ENCODE measurements at regions of chr11 and their contacts with region 1.

Region 1: DNA sequence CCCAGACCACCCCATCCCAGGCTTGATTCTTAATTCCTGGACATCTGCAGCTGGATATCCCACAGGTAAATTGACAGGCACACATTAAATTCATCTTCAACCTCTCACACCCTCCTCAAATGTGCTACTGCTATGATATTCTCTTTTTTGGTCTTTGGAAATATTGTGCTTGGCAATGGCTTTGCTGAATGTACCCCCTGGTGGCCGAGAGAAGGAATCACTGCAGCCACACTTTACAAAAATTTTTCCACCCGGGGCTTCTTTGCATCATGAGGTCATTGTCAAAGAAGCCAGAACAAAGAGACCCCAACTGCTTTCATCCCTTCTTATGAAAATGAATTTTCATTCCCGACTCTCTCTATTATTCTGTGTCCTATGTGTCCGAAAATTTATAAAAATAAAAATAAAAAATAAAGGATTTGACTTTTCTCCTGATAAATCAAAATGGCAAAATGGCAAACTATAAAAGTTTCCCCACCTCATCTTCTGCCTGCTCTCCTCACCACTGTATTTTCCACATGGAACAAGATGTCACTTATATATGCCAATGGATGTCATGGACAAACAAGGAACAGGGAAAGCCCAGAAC is 15.0 kb upstream of the CYB5R2 start:
- DNase-seq: peak; percentile 35
- H3K4me3 Mint-ChIP-seq: no peak overlapping the region
- H3K27ac Mint-ChIP-seq: no peak overlapping the region
- H3K4me1 Mint-ChIP-seq: peaks cover 6% of the 10 kb centered on the region
- H3K27me3 Mint-ChIP-seq: peaks cover 26% of the 10 kb centered on the region

Region 2: DNA sequence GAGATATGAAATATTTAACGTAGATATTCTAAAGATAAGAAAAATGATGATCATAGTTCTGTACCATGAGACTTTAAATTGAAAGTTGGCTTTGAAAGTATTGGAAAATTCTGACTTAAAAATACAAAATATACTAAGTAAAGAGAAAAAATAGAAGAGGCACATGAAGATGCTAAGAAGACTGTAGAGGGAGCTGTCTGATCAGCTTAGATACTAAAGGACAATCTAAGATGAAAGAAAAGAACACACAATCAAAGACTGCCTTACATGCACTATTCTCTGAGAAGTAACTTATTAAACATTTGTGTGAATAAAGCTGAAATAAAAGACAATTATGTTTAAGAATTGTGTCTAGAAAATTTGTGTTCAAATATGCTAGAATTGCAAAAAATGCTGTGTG is 544.4 kb before region 1 on chr11:
- CTCF ChIA-PET with region 1: no interaction called
- intact Hi-C with region 1: loop called (anchors 2 kb)
- DNase-seq: no peak
- H3K4me3 Mint-ChIP-seq: no peak overlapping the region
- H3K27ac Mint-ChIP-seq: no peak overlapping the region
- H3K4me1 Mint-ChIP-seq: no peaks in the 10 kb centered on the region
- H3K27me3 Mint-ChIP-seq: peaks cover 5% of the 10 kb centered on the region

Region 3: GRCh38 chr11:7571640-7572000 is 116.7 kb before region 1 on chr11:
- CTCF ChIA-PET with region 1: interaction called, 12 read pairs
- intact Hi-C with region 1: loop called (anchors 1 kb)
- DNase-seq: peak; percentile 62
- H3K4me3 Mint-ChIP-seq: no peak overlapping the region
- H3K27ac Mint-ChIP-seq: no peak overlapping the region
- H3K4me1 Mint-ChIP-seq: peaks cover 19% of the 10 kb centered on the region
- H3K27me3 Mint-ChIP-seq: no peaks in the 10 kb centered on the region

Region 4: GRCh38 chr11:7592711-7593110 is 95.6 kb before region 1 on chr11:
- CTCF ChIA-PET with region 1: no interaction called
- intact Hi-C with region 1: no loop called
- DNase-seq: no peak
- H3K4me3 Mint-ChIP-seq: no peak overlapping the region
- H3K27ac Mint-ChIP-seq: no peak overlapping the region
- H3K4me1 Mint-ChIP-seq: peaks cover 18% of the 10 kb centered on the region
- H3K27me3 Mint-ChIP-seq: no peaks in the 10 kb centered on the region

Region 5: GRCh38 chr11:7672960-7673723 is 15.2 kb before region 1 on chr11 and contains the start of gene CYB5R2:
- CTCF ChIA-PET with region 1: no interaction called
- intact Hi-C with region 1: loop called (anchors 1 kb)
- DNase-seq: peak; percentile 17
- H3K4me3 Mint-ChIP-seq: peak within 1 kb of the TSS; percentile 64
- H3K27ac Mint-ChIP-seq: peak within 1 kb of the TSS; percentile 66
- H3K4me1 Mint-ChIP-seq: peaks cover 49% of the 10 kb centered on the region
- H3K27me3 Mint-ChIP-seq: peaks cover 36% of the 10 kb centered on the region
- total RNA-seq, gene CYB5R2: 5.5 to 8.2 TPM

Region 6: DNA sequence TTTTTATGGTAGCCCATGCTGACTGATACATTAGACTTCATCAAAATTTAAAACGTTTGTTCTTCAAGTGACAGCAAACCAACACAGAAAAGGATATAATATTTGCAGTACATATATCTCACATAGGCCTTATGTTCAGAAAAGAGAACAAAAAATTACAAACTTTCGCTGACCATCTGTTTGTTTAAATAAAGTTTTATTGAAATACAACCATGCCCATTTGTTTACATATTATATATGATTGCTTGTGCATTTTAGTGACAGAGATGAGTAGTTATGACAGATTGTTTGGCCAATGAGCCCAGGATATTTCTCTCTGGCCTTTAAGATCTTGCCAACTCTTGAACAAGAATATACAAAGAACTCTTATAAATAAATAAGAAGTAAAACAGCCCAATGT is 115.9 kb after region 1 on chr11:
- CTCF ChIA-PET with region 1: no interaction called
- intact Hi-C with region 1: no loop called
- DNase-seq: no peak
- H3K4me3 Mint-ChIP-seq: no peak overlapping the region
- H3K27ac Mint-ChIP-seq: no peak overlapping the region
- H3K4me1 Mint-ChIP-seq: no peaks in the 10 kb centered on the region
- H3K27me3 Mint-ChIP-seq: peaks cover 10% of the 10 kb centered on the region

Measured in activated naive CD4-positive, alpha-beta T cell treated with anti-CD3 and anti-CD28 coated beads for 36 hours (primary cell).